Activated B cell treated with CpG ODN at 0.5 μM for 24 hours (primary cell): ENCODE measurements at regions of chr9 and their contacts with region 1.

Region 1: GRCh38 chr9:127916665-127917613 is at the start of gene ST6GALNAC4:
- DNase-seq: peak; percentile 94
- ATAC-seq: peak; percentile 83
- H3K4me3 Mint-ChIP-seq: peak within 1 kb of the TSS; percentile 88
- H3K27ac Mint-ChIP-seq: peak within 1 kb of the TSS; percentile 95
- H3K4me1 Mint-ChIP-seq: peaks cover 74% of the 10 kb centered on the region
- H3K27me3 Mint-ChIP-seq: no peaks in the 10 kb centered on the region
- CTCF ChIP-seq: no peak
- total RNA-seq, gene ST6GALNAC4: 71.3 and 85.4 TPM in 2 replicates

Region 2: DNA sequence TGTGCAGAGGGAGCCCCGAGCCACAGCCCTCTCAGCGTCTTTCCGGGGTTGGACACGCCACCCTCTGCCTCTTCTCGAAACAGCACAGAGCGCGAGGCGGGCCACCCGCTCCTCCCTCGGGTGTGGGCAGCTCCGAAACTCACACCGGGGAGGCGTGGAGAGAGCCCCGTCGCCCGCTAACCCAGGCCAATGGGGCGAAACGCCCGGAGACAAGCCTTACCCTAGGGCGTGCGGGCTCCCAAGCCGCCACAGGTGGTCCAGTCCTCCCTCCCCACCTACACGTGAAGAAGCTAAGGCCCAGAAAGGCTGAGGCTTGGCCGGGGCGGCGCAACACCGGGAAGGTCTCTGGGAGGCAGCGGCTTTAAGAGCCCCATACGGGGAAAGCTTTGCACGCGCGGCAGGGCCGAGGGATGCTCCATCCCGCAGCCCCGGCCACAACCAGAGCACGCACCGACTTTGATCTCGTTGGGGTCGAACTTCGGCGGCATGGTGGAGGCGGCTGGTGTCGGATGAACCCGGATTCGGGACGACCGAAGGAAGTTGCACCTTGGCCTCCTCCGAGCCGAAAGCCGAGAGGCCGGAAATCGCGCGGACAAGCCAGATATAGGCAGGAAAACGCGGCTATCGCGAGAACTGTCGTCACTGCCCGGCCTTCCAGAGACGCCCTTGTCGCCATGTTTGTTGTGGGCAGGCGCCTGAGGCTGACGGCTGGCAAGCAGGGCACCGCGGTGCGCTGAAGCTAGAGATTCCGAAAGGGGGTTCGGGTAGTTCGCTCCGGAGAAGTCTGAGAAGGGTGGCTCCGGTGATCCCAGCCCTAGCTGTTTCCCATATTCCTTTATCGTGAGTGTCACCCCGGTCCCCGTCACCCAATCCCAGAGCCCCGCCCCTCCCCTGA is 465.9 kb before region 1 on chr9 and contains the starts of genes LRSAM1 and RPL12:
- CTCF ChIA-PET with region 1: no interaction called
- POLR2A ChIA-PET with region 1: interaction called, 14 read pairs
- intact Hi-C with region 1: no loop called
- DNase-seq: peak; percentile 99
- ATAC-seq: peak; percentile 66
- H3K4me3 Mint-ChIP-seq: peak within 1 kb of the TSS; percentile 96
- H3K27ac Mint-ChIP-seq: peak within 1 kb of the TSS; percentile 96
- H3K4me1 Mint-ChIP-seq: peaks cover 68% of the 10 kb centered on the region
- H3K27me3 Mint-ChIP-seq: no peaks in the 10 kb centered on the region
- CTCF ChIP-seq: no peak
- total RNA-seq, gene LRSAM1: 19.4 and 23.9 TPM in 2 replicates
- total RNA-seq, gene RPL12: 2,278 and 2,307 TPM in 2 replicates

Region 3: GRCh38 chr9:127734747-127735529 is 182.0 kb before region 1 on chr9 and contains the start of gene TOR2A:
- CTCF ChIA-PET with region 1: interaction called, 29 read pairs
- POLR2A ChIA-PET with region 1: interaction called, 24 read pairs
- intact Hi-C with region 1: loop called (anchors 1 kb)
- DNase-seq: peak; percentile 96
- ATAC-seq: peak; percentile 92
- H3K4me3 Mint-ChIP-seq: peak within 1 kb of the TSS; percentile 83
- H3K27ac Mint-ChIP-seq: peak within 1 kb of the TSS; percentile 91
- H3K4me1 Mint-ChIP-seq: peaks cover 13% of the 10 kb centered on the region
- H3K27me3 Mint-ChIP-seq: no peaks in the 10 kb centered on the region
- CTCF ChIP-seq: peak; percentile 15
- total RNA-seq, gene TOR2A: 13.8 and 15.1 TPM in 2 replicates

Region 4: GRCh38 chr9:127796225-127796813 is 120.6 kb before region 1 on chr9:
- CTCF ChIA-PET with region 1: interaction called, 3 read pairs
- POLR2A ChIA-PET with region 1: interaction called, 12 read pairs
- intact Hi-C with region 1: no loop called
- DNase-seq: no peak
- ATAC-seq: peak; percentile 45
- H3K4me3 Mint-ChIP-seq: peak overlapping the region; percentile 64
- H3K27ac Mint-ChIP-seq: peak overlapping the region; percentile 75
- H3K4me1 Mint-ChIP-seq: peaks cover 32% of the 10 kb centered on the region
- H3K27me3 Mint-ChIP-seq: no peaks in the 10 kb centered on the region
- CTCF ChIP-seq: no peak

Region 5: DNA sequence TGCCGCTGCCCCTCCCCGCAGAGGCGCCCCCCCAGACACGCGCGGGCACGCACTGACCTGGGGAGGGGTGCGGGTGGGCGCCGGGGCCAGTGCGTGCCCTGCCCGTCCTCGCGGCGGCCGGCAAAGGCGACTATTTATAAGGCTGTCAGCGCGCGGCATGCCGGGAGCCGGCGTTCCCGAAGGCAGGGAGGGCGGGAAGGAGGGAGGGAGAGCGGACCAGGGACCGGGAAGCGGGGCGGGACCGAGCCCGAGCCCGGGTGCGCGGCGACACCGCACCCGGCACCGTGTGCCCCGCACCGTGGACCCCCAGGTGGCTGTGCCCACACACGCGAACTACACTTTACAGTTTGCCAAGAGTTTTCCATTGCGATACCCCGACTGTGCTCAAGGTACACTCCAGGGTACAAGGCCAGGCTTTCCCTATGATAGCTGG is 39.4 kb before region 1 on chr9 and contains the start of gene AK1:
- CTCF ChIA-PET with region 1: interaction called, 6 read pairs
- POLR2A ChIA-PET with region 1: interaction called, 5 read pairs
- intact Hi-C with region 1: loop called (anchors 1 kb)
- DNase-seq: no peak
- ATAC-seq: peak; percentile 5
- H3K4me3 Mint-ChIP-seq: peak within 1 kb of the TSS; percentile 62
- H3K27ac Mint-ChIP-seq: no peak within 1 kb of the TSS
- H3K4me1 Mint-ChIP-seq: peaks cover 28% of the 10 kb centered on the region
- H3K27me3 Mint-ChIP-seq: no peaks in the 10 kb centered on the region
- CTCF ChIP-seq: no peak
- total RNA-seq, gene AK1: 6.9 and 8.1 TPM in 2 replicates

Region 6: DNA sequence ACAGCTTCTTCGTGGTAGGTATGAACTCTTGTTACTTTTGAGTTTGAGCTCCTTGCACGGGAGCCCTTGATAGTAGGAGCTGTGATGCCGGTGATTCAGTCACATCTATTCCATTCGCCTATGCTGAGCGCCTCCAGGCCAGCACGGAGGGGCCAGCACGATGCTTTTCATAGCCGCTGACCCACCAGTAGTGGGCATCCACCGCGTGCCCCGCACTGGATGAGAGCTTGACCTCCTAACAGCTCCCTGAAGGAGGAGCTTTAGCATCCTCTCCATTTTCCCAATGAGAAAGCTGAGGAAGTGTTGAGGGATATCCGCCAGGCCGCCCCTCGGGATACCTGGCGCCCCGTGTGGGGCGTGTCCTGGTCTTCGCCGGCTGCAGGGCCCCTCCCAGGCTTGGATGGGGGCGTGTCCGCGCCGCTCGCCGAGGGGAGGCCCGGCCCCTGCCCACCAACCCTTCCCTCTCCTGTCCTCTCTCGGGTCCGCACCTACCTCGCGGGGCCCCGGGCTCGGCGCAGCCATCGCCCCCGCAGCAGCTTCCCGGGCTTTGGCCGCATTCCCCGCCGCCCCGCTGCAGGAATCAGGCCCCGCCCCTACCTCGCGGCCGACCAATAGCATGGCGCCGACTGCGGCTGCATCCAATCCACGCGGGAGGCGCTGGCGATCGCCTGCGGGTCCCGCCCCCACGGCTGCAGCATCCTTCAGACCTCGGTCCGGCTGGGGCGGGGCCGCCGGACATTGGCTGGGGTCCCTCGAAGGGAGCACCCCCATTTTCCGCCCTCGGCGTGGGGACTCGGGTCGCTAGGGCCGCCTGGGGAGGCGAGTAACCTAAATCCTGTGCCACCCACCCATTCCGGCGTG is 13.5 kb after region 1 on chr9 and contains the start of gene PIP5KL1:
- CTCF ChIA-PET with region 1: interaction called, 6 read pairs
- POLR2A ChIA-PET with region 1: interaction called, 7 read pairs
- intact Hi-C with region 1: loop called (anchors 2 kb)
- DNase-seq: peak; percentile 79
- ATAC-seq: peak; percentile 80
- H3K4me3 Mint-ChIP-seq: peak within 1 kb of the TSS; percentile 78
- H3K27ac Mint-ChIP-seq: no peak within 1 kb of the TSS
- H3K4me1 Mint-ChIP-seq: peaks cover 37% of the 10 kb centered on the region
- H3K27me3 Mint-ChIP-seq: peaks cover 3% of the 10 kb centered on the region
- CTCF ChIP-seq: no peak
- total RNA-seq, gene PIP5KL1: 1.7 and 1.8 TPM in 2 replicates